ENCODE measurements at regions of chr9 and their contacts with region 1.

Region 1: GRCh38 chr9:37465249-37466036 is at the start of gene ZBTB5:
- DNase-seq: peak; percentile 95
- ATAC-seq: peak; percentile 80
- H3K4me3 Mint-ChIP-seq: peak within 1 kb of the TSS; percentile 96
- H3K27ac Mint-ChIP-seq: peak within 1 kb of the TSS; percentile 95
- H3K4me1 Mint-ChIP-seq: peaks cover 25% of the 10 kb centered on the region
- H3K27me3 Mint-ChIP-seq: no peaks in the 10 kb centered on the region
- total RNA-seq, gene ZBTB5: 12.5 to 13.3 TPM

Region 2: DNA sequence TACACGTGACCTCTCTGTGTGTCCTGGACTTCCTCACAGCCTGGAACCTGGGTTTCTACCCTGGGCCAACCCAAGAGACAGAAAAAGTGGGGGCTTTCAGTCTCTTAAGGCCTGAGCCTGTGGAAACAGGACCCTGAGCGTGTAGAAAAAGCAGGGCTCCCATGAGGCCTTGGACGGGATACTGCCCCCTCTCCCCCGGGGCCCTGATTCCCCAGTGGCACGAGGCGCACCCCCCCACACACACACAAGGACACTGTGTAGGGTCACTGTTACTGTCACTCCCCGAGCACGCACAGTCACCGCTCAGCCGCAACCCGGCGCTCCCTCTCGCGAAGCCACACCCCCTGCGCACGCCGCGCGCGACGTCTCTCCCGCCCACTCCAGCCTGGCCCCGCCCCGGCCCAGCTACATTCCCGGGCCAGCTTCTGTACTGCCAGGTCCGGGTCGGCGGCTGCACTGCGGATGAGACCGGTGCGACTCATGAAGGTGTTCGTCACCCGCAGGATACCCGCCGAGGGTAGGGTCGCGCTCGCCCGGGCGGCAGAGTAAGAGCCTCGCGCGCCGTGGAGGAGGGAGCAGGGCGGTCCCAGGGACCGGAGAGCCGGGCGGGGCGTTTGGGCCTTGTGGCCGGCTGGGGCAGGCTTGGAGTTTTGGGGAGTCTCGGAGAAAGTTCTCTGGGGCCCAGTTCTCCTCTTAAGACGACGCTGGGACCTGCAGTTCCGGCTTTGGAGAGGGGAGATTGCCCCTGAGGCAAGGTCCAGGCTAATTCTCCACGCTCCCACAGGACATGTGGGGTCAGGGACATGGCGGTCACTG is 42.9 kb before region 1 on chr9 and contains the start of gene GRHPR:
- POLR2A ChIA-PET with region 1: interaction called, 12 read pairs
- DNase-seq: peak; percentile 93
- ATAC-seq: peak; percentile 98
- H3K4me3 Mint-ChIP-seq: peak within 1 kb of the TSS; percentile 91
- H3K27ac Mint-ChIP-seq: peak within 1 kb of the TSS; percentile 89
- H3K4me1 Mint-ChIP-seq: peaks cover 15% of the 10 kb centered on the region
- H3K27me3 Mint-ChIP-seq: no peaks in the 10 kb centered on the region
- total RNA-seq, gene GRHPR: 63.1 to 67.9 TPM

Region 3: GRCh38 chr9:37449862-37450632 is 15.4 kb before region 1 on chr9:
- POLR2A ChIA-PET with region 1: no interaction called
- DNase-seq: no peak
- ATAC-seq: no peak
- H3K4me3 Mint-ChIP-seq: no peak overlapping the region
- H3K27ac Mint-ChIP-seq: no peak overlapping the region
- H3K4me1 Mint-ChIP-seq: peaks cover 5% of the 10 kb centered on the region
- H3K27me3 Mint-ChIP-seq: no peaks in the 10 kb centered on the region

Region 4: GRCh38 chr9:37485389-37486219 is 20.2 kb after region 1 on chr9 and contains the start of gene POLR1E:
- POLR2A ChIA-PET with region 1: interaction called, 44 read pairs
- DNase-seq: peak; percentile 99
- ATAC-seq: peak; percentile 98
- H3K4me3 Mint-ChIP-seq: peak within 1 kb of the TSS; percentile 98
- H3K27ac Mint-ChIP-seq: peak within 1 kb of the TSS; percentile 96
- H3K4me1 Mint-ChIP-seq: peaks cover 27% of the 10 kb centered on the region
- H3K27me3 Mint-ChIP-seq: peaks cover 10% of the 10 kb centered on the region
- total RNA-seq, gene POLR1E: 33.0 to 36.5 TPM

Measured in activated naive CD8-positive, alpha-beta T cell treated with anti-CD3 and anti-CD28 coated beads, Interleukin-2, amount 10 ng/mL, durations not matched to agents 7 days and 5 days (primary cell).